ENCODE measurements at regions of chr3 and their contacts with region 1.

Region 1: DNA sequence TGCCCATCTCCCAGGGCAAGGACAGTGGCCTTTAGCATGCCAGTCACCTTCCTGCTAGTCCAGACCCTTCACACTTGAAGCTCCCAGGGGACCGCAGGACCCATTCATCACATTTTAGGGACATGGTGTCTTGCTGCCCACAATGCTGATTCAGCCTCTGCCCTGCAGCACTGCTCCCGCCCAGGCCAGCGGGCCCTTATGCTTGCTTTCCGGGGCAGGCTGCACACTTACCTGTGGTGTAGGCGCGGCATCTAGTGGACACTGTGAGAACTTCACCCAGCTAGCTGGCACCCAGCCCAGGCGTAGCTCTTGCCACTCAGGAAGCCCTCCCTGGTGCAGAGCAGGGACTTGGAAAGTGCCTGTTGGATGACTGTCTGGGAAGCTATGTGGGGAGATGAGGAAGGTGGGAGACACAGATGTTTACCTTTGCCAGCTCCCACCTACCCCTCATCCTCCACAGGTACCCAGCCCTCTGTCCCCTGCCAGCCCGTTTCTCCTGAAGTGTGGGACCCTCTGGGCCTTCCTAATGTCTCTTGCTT is 26.2 kb upstream of the NR2C2 start:
- DNase-seq: peak; percentile 93 to 95
- H3K4me3 ChIP-seq: no peak overlapping the region
- H3K27ac ChIP-seq: no peak overlapping the region
- H3K4me1 ChIP-seq: peaks cover 0 to 11% (median 7%) of the 10 kb centered on the region in 4 donors
- H3K27me3 ChIP-seq: no peaks in the 10 kb centered on the region
- CTCF ChIP-seq: peak in 6 of 7 experiments; percentile 92 to 100 (median 98)
- EP300 ChIP-seq: no peak
- POLR2A ChIP-seq: no peak

Region 2: GRCh38 chr3:14780927-14781507 is 140.1 kb before region 1 on chr3:
- intact Hi-C with region 1: no loop called
- DNase-seq: peak; percentile 69 to 84
- H3K4me3 ChIP-seq: no peak overlapping the region
- H3K27ac ChIP-seq: no peak overlapping the region
- H3K4me1 ChIP-seq: peaks cover 0 to 3% (median 0%) of the 10 kb centered on the region in 4 donors
- H3K27me3 ChIP-seq: peaks cover 0 to 13% (median 0%) of the 10 kb centered on the region in 3 donors
- CTCF ChIP-seq: peak in 2 of 7 experiments; percentile 32 to 56
- EP300 ChIP-seq: no peak
- POLR2A ChIP-seq: no peak

Region 3: DNA sequence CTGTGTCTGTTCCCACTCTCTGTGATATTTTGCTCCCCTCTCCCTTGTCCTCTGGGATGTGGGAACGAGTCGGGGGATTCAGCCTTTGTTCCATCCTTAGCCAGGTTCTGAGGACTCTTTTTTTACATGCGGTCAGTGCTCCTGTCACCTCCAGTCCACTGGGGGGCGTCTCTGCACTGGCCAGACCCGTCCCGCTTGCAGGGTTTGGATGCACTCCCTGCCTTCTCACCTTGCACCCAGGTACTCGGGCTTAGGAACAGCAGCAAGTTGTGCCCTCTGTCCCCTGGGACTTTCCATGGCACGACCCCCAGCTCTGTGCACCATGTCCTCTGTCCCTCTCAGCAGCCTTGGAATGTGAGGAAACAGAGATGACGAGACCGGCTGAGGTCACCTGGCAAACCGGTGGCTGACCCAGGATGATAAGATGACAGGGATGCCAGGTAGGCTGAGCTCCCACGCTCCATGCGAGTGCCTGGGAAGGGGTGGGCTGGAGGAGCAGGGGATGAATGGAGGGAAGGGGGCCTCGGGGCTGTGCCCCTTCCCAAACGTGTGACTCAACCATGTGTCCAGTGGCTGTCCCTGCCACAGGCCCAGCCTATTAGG is 129.7 kb before region 1 on chr3:
- intact Hi-C with region 1: loop called (anchors 5 kb)
- DNase-seq: peak; percentile 70 to 87
- H3K4me3 ChIP-seq: no peak overlapping the region
- H3K27ac ChIP-seq: no peak overlapping the region
- H3K4me1 ChIP-seq: peaks cover 0 to 13% (median 4%) of the 10 kb centered on the region in 4 donors
- H3K27me3 ChIP-seq: peaks cover 0 to 15% (median 0%) of the 10 kb centered on the region in 3 donors
- CTCF ChIP-seq: peak in 5 of 7 experiments; percentile 41 to 71 (median 54)
- EP300 ChIP-seq: no peak
- POLR2A ChIP-seq: no peak

Region 4: GRCh38 chr3:15159501-15160136 is 238.5 kb after region 1 on chr3:
- intact Hi-C with region 1: no loop called
- DNase-seq: no peak
- H3K4me3 ChIP-seq: no peak overlapping the region
- H3K27ac ChIP-seq: no peak overlapping the region
- H3K4me1 ChIP-seq: no peaks in the 10 kb centered on the region
- H3K27me3 ChIP-seq: peaks cover 0 to 25% (median 4%) of the 10 kb centered on the region in 3 donors
- CTCF ChIP-seq: no peak
- EP300 ChIP-seq: no peak
- POLR2A ChIP-seq: no peak